ENCODE measurements at regions of chr12 and their contacts with region 1.

Region 1: GRCh38 chr12:91355150-91356006 is 172.8 kb upstream of the DCN start:
- DNase-seq: peak; percentile 81
- H3K4me3 Mint-ChIP-seq: no peak overlapping the region
- H3K27ac Mint-ChIP-seq: no peak overlapping the region
- H3K4me1 Mint-ChIP-seq: peaks cover 4% of the 10 kb centered on the region
- H3K27me3 Mint-ChIP-seq: peaks cover 32% of the 10 kb centered on the region
- CTCF ChIP-seq: peak; percentile 80

Region 2: GRCh38 chr12:90978117-90978770 is 377.1 kb before region 1 on chr12:
- CTCF ChIA-PET with region 1: interaction called, 18 read pairs
- POLR2A ChIA-PET with region 1: no interaction called
- intact Hi-C with region 1: loop called (anchors 1 kb)
- DNase-seq: peak; percentile 63
- H3K4me3 Mint-ChIP-seq: no peak overlapping the region
- H3K27ac Mint-ChIP-seq: no peak overlapping the region
- H3K4me1 Mint-ChIP-seq: no peaks in the 10 kb centered on the region
- H3K27me3 Mint-ChIP-seq: peaks cover 15% of the 10 kb centered on the region
- CTCF ChIP-seq: peak; percentile 77

Region 3: GRCh38 chr12:91109148-91109564 is 246.2 kb before region 1 on chr12:
- CTCF ChIA-PET with region 1: interaction called, 14 read pairs
- POLR2A ChIA-PET with region 1: no interaction called
- intact Hi-C with region 1: no loop called
- DNase-seq: peak; percentile 71
- H3K4me3 Mint-ChIP-seq: no peak overlapping the region
- H3K27ac Mint-ChIP-seq: no peak overlapping the region
- H3K4me1 Mint-ChIP-seq: no peaks in the 10 kb centered on the region
- H3K27me3 Mint-ChIP-seq: peaks cover 71% of the 10 kb centered on the region
- CTCF ChIP-seq: peak; percentile 57

Region 4: DNA sequence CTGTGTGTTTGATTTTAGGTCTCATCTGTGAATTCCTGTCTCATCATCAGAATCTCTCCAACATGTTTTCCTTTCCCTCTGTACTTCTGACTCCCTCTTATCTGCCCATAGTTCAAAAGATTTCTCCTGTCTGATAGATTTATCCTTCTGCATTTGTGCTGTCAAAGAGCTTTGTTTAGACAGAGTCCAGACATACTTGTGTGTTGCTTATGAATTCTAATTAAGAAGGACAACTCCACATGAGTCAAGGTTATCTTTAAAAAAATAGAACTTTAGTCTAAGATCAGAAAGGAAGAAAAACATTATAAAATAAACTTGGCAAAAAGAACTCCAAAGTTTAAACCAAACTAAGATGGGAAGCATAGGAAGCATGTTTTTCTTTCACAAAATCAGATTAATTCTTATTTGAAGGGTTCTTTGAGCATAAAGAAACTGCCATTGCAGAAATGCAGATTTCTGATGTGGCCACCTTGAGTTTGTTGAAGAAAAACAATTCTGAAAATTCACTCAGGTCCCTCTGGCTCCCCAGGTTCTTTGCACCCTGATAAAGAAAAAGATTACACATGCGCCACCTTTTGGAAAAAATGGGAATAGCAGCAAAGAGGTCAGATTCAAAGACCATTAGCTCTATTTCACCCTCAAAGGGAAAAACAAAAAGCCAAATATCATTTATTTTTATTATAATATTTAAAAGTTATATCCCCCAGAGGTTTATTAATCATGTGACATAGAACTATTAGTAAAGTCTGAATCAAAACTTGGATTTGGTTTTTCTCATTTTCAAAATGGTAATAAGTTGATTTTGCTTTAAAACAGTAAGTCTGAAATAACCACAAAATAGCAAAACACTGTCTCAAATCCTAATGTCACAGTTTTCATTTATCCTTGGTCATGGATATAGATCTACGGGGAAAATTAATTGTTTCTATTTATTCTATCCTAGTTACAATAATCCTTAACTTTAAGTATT is 29.0 kb before region 1 on chr12:
- CTCF ChIA-PET with region 1: interaction called, 15 read pairs
- POLR2A ChIA-PET with region 1: interaction called, 6 read pairs
- intact Hi-C with region 1: no loop called
- DNase-seq: peak; percentile 72
- H3K4me3 Mint-ChIP-seq: no peak overlapping the region
- H3K27ac Mint-ChIP-seq: no peak overlapping the region
- H3K4me1 Mint-ChIP-seq: no peaks in the 10 kb centered on the region
- H3K27me3 Mint-ChIP-seq: peaks cover 38% of the 10 kb centered on the region
- CTCF ChIP-seq: peak; percentile 67

Measured in MCF 10A (cell line).